KBM-7 (cell line): ENCODE measurements at regions of chr10 and their contacts with region 1.

Region 1: DNA sequence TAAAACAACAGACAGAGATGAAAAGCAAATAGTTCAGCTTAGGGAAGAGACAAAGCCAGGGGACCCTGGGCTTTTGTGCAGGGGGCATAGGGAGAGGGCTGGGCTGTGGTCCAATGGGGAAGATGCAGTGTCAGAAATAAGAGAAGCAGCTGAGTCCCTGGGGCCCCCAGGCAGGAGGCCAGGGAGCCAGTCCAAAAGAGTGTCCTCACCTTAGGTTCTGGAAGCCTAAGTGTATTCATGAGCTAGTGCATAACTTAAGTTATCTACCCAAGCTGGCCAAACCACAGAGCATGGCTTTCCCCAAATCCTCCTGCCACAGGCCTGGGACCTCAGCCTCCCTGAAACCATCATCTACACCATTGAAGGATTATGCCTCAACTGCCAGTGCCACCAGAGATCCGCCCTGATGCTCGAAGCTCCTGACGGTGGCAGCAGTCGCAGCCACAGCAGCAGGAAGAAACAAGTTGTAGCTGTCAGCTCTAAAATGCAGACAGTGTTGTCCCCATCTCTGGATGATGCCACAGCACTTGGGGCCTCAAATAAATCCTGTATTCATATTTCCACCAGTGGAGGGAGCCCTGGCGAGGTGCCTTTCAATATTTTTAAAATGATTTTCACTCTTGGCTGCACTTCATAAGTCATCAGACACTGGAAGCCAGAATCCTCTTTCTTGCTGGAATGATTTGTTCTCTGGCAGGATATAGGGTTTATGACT is 574.6 kb downstream of the GRID1 start:
- DNase-seq: peak; percentile 21

Region 2: DNA sequence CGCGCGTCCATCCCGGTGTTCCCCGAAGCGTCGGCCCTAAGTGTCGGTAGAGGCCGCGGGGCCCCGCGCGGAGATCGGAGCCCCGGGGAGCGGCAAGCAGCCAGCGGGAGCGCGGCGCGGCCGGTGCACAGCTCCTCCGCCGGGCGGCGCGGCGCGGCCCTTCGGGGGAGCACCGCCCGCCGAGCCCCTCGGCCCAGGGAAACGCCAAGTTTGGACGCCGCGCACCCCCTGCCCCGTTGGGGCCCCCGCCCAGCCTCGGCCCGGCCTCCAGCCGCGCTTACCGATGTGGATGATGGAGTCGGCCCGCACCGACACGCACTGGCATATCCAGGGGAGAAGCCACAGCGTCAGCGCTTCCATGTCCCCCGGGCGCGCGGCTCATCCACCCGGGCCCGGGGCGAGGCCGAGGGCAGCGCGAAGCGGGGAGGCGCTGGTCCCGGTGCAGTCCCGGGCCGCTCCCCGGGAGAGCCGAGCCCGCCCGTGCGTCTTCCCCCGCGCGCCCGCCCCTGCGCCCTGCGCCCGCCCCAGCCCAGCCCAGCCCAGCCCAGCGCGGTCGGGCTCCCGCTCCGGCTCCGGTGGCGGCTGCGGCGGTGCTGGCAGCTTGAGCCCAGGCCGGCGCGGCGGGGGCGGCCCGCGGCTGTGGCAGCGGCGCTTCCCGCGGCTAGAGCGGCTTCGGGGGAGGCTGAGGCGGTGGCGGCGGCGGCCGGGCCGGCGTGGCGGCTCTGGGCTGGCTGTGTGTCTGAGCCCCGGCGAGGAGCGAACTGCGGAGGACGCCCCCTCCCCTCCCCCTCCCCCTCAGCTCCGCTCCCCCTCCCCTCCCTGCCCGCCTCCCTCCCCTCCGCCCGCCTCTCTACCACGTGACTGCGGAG is 574.3 kb after region 1 on chr10 and contains the start of gene GRID1:
- in situ Hi-C with region 1: loop called (anchors 25 kb)
- DNase-seq: peak; percentile 15